ENCODE measurements at regions of chr12 and their contacts with region 1.

Region 1: DNA sequence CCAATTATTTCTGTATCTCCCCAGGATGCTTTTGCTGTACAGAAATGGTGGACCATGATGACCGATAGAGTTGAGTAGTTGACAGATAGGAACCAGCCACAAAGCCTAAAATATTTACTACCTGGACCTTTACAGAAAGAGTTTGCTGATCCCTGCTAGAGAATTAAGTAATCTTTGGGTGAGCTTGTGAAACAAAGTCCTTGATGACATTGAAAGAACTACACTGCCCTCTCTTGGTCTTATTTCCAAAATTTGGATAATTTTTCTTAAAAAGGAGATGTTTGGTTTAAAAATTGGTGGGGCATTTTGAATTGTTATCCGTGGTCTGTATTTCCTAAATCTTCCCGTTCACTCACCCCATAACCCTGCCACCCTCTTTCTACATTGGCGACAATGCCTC is 13.7 kb upstream of the TCTN1 start:
- DNase-seq: no peak
- H3K4me3 ChIP-seq: peak overlapping the region in 1 of 59 donors; percentile 7
- H3K27ac ChIP-seq: peak overlapping the region in 3 of 59 donors; percentile 14 to 37 (median 15)
- H3K27me3 ChIP-seq: no peaks in the 10 kb centered on the region
- CTCF ChIP-seq: peak; percentile 25 to 83 (median 62)

Region 2: GRCh38 chr12:110449799-110450497 is 150.3 kb before region 1 on chr12 and contains the start of gene ARPC3:
- intact Hi-C with region 1: loop called (anchors 5 kb)
- DNase-seq: peak; percentile 89 to 95 (median 94)
- H3K4me3 ChIP-seq: peak within 1 kb of the TSS; percentile 60 to 97 (median 86)
- H3K27ac ChIP-seq: peak within 1 kb of the TSS; percentile 36 to 96 (median 89)
- H3K27me3 ChIP-seq: no peaks in the 10 kb centered on the region
- CTCF ChIP-seq: peak; percentile 67 to 96 (median 87)
- total RNA-seq, gene ARPC3: 78.9 to 178 (median 137) TPM

Region 3: GRCh38 chr12:110549716-110550115 is 50.5 kb before region 1 on chr12:
- intact Hi-C with region 1: loop called (anchors 2 to 5 kb)
- DNase-seq: no peak
- H3K4me3 ChIP-seq: no peak overlapping the region
- H3K27ac ChIP-seq: peak overlapping the region in 4 of 59 donors; percentile 2 to 38 (median 27)
- H3K27me3 ChIP-seq: no peaks in the 10 kb centered on the region
- CTCF ChIP-seq: no peak

Region 4: DNA sequence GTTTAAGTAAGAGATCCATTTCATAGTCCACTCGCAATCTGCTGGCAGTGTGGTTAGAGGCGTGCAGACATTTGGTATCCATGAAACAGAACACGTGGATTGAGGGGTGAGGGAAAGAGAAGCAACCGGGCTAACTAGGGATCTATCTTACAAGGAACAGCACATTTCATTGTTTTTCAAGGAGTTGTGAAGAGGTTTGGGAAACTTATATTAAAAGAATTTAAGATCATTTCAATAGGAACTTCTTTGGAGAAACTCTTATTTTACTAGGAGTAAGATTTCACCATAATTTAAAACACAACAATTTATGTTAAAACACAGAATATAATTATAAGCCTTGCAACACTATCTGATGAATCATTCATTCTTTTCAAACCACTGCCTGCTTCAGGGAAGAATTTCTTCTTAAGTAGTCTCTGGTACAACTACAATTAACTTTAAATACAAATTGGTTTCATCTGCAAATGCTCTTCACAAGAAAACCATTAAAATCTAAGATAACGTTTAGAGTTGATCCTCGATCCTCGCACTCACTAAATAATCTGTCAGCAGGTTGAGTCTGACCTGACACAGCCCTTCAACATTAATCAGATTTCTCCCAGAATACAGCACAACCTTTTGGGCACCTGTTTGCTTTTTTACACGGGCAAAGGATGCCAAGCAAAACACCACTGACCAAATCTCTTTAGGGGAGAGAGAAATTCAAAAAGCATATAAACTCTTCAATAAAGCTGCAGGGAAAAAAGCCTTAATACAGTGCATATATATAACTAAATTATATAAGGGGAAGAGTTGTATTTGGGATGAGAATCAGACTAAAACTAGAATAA is 44.5 kb before region 1 on chr12:
- intact Hi-C with region 1: loop called (anchors 2 to 5 kb)
- DNase-seq: no peak
- H3K4me3 ChIP-seq: peak overlapping the region in 1 of 59 donors; percentile 3
- H3K27ac ChIP-seq: no peak overlapping the region
- H3K27me3 ChIP-seq: no peaks in the 10 kb centered on the region
- CTCF ChIP-seq: no peak

Measured in dorsolateral prefrontal cortex (tissue), 120 donors.